Activated CD4-positive, alpha-beta T cell treated with anti-CD3 and anti-CD28 coated beads, Interleukin-2, amount 10 ng/mL, durations not matched to agents 24 days and 14 days (primary cell): ENCODE measurements at regions of chr9 and their contacts with region 1.

Region 1: DNA sequence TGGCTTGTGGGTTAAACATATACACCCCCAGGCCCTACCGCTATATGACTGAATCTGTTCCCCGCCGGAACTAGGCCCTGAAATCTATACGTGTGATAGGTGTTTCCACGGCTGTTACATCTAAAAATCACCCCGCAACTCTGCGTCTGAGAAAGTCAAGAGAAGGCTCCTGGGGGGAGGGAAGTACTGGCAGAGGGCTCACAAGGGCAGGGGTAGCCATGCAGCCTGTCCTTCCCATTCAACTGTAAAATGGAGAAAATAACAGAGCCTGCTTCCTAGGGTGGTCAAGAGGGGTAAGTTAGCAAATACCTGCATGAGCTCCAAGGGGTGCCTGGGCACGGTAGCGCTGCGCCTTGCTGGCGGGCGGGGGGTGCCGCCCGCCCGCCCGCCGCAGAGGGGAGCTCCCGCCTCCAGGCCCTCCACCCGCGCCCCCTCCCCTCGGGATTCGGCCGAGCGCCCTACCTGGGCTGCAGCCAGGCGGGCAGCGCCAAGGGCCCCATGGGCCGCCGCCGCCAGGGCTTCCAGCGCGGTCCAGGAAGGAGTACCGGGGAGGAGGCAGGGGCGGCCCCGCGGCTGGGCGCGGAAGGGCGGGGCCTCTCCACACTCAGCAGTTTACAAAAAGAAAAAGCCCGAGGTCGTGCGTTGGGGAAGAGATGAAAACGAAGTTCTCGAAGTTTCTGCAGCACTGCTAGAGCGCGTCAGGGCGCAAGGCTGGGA is at the start of gene HACD4:
- DNase-seq: peak; percentile 92
- H3K4me3 Mint-ChIP-seq: peak within 1 kb of the TSS; percentile 69
- H3K27ac Mint-ChIP-seq: peak within 1 kb of the TSS; percentile 78
- H3K4me1 Mint-ChIP-seq: peaks cover 11% of the 10 kb centered on the region
- H3K27me3 Mint-ChIP-seq: peaks cover 3% of the 10 kb centered on the region
- total RNA-seq, gene HACD4: 2.8 and 3.0 TPM in 2 replicates

Region 2: GRCh38 chr9:20552874-20553575 is 478.2 kb before region 1 on chr9:
- intact Hi-C with region 1: loop called (anchors 2 kb)
- DNase-seq: peak; percentile 69
- H3K4me3 Mint-ChIP-seq: peak overlapping the region; percentile 57
- H3K27ac Mint-ChIP-seq: peak overlapping the region; percentile 82
- H3K4me1 Mint-ChIP-seq: peaks cover 67% of the 10 kb centered on the region
- H3K27me3 Mint-ChIP-seq: no peaks in the 10 kb centered on the region

Region 3: DNA sequence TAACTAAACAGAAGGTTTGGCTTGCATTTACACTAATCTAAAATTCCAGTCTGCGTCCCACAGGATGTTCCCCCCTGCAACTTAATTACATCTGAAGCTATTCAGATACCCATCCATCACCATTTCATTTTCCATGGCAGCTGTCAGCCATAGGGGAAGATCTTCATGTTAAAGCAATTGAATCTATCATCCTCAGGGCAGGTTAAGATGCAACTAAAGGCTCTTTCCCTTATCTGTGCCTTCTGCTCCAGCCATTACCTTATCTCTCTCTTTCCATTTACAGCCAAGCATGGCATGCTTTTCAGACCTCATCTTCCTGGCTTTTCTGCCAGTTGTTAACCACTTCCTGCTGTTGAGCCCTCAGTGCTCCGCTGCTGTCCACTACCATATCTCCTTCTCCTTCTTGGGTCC is 16.0 kb after region 1 on chr9:
- intact Hi-C with region 1: no loop called
- DNase-seq: no peak
- H3K4me3 Mint-ChIP-seq: no peak overlapping the region
- H3K27ac Mint-ChIP-seq: no peak overlapping the region
- H3K4me1 Mint-ChIP-seq: peaks cover 5% of the 10 kb centered on the region
- H3K27me3 Mint-ChIP-seq: peaks cover 5% of the 10 kb centered on the region

Region 4: DNA sequence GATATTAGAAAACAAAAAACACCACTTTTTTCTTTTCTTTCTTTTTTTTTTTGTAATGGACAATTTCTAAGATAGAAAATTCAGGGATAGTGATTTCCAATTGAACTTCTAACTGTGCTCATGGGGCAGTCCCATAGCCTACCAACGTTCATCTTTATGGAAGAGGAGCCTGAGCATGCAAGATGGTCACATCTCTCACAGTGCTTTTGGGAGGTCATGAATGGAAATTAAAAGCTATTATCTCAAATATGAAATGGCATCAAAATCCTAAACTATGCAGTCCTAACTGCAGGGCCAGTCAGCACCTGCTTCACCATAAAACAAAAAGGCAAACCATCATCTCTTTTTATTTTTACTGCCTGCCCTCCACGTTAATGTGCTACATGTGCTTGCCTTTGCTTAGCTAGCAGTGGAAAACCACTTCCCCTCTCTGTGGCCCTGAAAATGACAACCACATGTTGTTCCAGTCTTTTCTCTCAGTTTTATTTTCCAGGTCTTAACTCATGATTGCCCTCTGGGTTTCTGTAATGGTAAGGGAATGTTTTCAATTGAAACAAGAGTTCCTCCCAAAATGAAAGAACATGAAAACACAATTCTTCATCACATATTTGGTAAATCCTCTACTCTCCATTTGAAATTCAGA is 29.8 kb after region 1 on chr9:
- intact Hi-C with region 1: loop called (anchors 2 kb)
- DNase-seq: peak; percentile 78
- H3K4me3 Mint-ChIP-seq: peak overlapping the region; percentile 8
- H3K27ac Mint-ChIP-seq: peak overlapping the region; percentile 40
- H3K4me1 Mint-ChIP-seq: peaks cover 18% of the 10 kb centered on the region
- H3K27me3 Mint-ChIP-seq: peaks cover 3% of the 10 kb centered on the region

Region 5: DNA sequence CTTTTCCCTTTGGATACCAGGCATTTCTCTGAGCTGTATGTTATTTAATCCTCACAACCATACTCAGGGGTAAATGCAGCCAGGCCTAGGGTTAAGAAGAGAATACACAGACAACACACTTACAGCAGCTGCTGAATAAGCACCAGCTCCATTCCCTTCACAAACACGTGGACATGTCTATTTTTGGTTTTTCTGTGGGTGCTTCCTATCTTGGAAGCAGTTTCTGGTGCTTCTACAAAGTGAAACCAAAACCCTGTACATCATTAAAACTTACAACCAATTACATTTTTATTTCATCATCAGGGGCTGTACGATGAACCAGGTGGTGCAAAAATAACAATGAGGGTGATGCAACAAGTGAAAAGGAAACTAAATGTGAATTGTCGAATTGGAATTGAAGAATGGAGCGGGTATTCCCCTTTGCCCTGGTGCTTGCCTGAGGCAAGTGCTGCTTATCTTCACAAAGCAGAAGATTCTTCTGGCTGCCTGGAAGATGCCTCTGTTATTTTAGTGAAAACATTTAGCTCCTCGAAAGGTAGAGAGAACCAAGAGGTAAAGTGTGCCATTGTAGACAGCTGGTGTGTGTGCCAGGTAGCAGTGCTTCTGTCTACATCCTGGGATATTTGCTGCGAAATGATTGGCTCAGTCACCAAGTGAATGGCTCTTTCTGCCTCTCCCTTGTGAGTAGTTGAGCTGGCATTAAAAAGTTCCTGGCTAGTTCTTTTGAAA is 65.1 kb after region 1 on chr9:
- intact Hi-C with region 1: loop called (anchors 1 kb)
- DNase-seq: peak; percentile 85
- H3K4me3 Mint-ChIP-seq: peak overlapping the region; percentile 68
- H3K27ac Mint-ChIP-seq: peak overlapping the region; percentile 76
- H3K4me1 Mint-ChIP-seq: peaks cover 32% of the 10 kb centered on the region
- H3K27me3 Mint-ChIP-seq: no peaks in the 10 kb centered on the region